AG04449 (cell line): ENCODE measurements at regions of chr14 and their contacts with region 1.

Region 1: GRCh38 chr14:103994535-103995182 is 52.3 kb upstream of the RD3L start:
- DNase-seq: no peak
- H3K4me3 ChIP-seq: no peak overlapping the region
- CTCF ChIP-seq: no peak

Region 2: GRCh38 chr14:103973354-103973753 is 21.3 kb before region 1 on chr14:
- CTCF ChIA-PET with region 1: interaction called, 11 read pairs
- POLR2A ChIA-PET with region 1: no interaction called
- DNase-seq: no peak
- H3K4me3 ChIP-seq: no peak overlapping the region
- CTCF ChIP-seq: no peak

Region 3: DNA sequence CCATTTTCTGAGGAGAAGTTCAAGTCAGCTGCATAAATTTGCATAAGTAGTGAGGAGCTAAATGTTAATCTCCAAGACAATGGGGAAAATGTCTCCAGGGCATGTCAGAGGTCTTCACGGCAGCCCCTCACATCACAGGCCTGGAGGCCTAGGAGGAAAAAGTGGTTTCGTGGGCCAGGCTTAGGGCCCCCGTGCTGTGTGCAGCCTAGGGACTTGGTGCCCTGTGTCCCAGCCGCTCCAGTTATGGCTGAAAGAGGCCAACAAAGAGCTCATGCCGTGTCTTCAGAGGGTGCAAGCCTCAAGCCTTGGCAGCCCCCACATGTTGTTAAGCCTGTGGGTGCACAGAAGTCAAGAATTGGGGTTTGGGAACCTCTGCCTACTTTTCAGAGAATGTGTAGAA is 10.5 kb before region 1 on chr14:
- CTCF ChIA-PET with region 1: interaction called, 19 read pairs
- POLR2A ChIA-PET with region 1: no interaction called
- DNase-seq: no peak
- H3K4me3 ChIP-seq: no peak overlapping the region
- CTCF ChIP-seq: no peak